ENCODE measurements at regions of chr17 and their contacts with region 1.

Region 1: DNA sequence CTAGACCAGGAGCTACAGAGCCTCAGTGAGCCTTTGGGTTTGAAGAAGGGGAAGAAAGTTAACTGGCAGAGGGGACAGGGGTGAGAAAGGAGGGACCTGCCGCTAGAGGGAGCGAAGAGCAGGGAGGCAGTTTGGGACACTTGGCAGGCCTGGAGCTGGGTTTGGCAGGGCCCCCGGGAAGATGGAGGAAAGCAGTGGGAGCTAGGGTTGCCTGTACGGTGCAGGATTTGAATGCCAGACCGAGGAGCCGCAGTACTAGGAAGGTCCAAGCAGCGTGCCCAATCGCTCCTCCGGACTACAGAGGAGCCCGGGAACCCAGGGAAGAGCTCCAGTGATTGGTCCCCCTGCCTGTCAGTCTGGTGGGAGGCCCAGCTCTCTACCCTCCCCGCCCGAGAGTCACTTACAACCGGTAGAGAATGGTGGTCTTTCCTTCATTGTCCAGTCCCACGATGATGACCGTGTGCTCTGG is 1.3 kb downstream of the ARL5C start:
- DNase-seq: peak; percentile 79 to 80
- H3K4me3 ChIP-seq: no peak overlapping the region
- H3K4me3 Mint-ChIP-seq: no peak overlapping the region
- H3K27ac Mint-ChIP-seq: no peak overlapping the region
- H3K4me1 ChIP-seq: peaks cover 21% of the 10 kb centered on the region
- H3K4me1 Mint-ChIP-seq: peaks cover 23% of the 10 kb centered on the region
- H3K27me3 ChIP-seq: no peaks in the 10 kb centered on the region
- H3K27me3 Mint-ChIP-seq: no peaks in the 10 kb centered on the region
- CTCF ChIP-seq: peak; percentile 76 to 86

Region 2: DNA sequence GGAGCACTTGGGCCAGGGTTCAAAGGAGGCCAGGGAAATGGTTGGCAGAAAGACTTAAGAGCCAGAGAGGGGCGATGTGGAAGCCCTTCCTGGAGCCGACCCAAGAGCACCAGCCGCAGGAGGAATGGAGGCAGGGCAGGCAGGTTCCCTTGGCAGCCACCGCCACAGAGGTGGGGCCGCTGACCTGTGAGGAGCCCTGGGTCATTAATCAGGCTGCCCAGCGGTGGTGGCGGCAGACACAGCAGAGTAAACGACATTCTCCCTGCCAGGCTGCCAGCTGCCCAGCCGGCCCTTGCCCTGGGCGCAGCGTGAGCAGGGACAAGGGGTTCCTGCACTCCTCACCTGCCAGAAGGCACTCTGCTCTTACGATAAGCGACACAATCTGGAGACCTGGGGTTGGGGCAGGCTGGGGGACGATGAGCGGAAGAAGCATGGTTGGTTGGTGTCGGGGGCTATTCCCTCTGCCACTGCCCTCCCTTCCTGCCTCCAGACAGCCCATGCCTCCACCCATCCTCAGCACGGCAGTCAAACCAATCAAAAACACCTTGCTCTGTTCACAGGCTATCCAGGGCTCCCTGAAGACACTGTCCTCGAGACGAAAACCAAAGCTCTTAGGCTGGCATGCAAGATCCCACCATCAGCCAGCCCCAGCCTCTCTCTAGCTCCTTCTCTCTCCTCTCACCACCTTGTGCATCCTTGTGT is 54.1 kb before region 1 on chr17:
- CTCF ChIA-PET with region 1: no interaction called
- POLR2A ChIA-PET with region 1: no interaction called
- intact Hi-C with region 1: no loop called
- DNase-seq: no peak
- H3K4me3 ChIP-seq: no peak overlapping the region
- H3K4me3 Mint-ChIP-seq: no peak overlapping the region
- H3K27ac Mint-ChIP-seq: no peak overlapping the region
- H3K4me1 ChIP-seq: 0 out of 2 replicates have a peak, but pooled peaks cover 3% of the 10 kb centered on the region
- H3K4me1 Mint-ChIP-seq: no peaks in the 10 kb centered on the region
- H3K27me3 ChIP-seq: no peaks in the 10 kb centered on the region
- H3K27me3 Mint-ChIP-seq: no peaks in the 10 kb centered on the region
- CTCF ChIP-seq: no peak

Region 3: DNA sequence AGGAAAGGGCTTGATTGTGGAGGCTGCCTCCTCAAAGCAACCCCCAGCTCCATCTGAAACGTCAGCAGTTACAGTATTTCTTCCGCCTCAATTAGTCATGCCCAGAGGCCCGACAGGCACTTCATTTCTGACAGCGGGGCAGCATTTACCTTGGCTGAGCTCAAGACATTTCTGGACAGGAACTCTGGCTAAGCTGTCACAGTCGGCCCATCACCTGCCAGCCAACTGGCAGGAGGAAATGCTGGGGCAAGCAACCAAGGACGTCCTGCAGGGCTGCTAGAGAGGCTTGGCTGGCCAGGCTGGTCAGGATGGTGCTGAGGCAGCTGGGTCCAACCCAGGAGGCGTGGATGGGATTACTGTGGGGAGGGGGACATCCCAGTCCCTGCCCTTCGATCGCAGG is 41.1 kb before region 1 on chr17:
- CTCF ChIA-PET with region 1: no interaction called
- POLR2A ChIA-PET with region 1: no interaction called
- intact Hi-C with region 1: no loop called
- DNase-seq: no peak
- H3K4me3 ChIP-seq: no peak overlapping the region
- H3K4me3 Mint-ChIP-seq: no peak overlapping the region
- H3K27ac Mint-ChIP-seq: no peak overlapping the region
- H3K4me1 ChIP-seq: no peaks in the 10 kb centered on the region
- H3K4me1 Mint-ChIP-seq: no peaks in the 10 kb centered on the region
- H3K27me3 ChIP-seq: no peaks in the 10 kb centered on the region
- H3K27me3 Mint-ChIP-seq: no peaks in the 10 kb centered on the region
- CTCF ChIP-seq: no peak

Region 4: DNA sequence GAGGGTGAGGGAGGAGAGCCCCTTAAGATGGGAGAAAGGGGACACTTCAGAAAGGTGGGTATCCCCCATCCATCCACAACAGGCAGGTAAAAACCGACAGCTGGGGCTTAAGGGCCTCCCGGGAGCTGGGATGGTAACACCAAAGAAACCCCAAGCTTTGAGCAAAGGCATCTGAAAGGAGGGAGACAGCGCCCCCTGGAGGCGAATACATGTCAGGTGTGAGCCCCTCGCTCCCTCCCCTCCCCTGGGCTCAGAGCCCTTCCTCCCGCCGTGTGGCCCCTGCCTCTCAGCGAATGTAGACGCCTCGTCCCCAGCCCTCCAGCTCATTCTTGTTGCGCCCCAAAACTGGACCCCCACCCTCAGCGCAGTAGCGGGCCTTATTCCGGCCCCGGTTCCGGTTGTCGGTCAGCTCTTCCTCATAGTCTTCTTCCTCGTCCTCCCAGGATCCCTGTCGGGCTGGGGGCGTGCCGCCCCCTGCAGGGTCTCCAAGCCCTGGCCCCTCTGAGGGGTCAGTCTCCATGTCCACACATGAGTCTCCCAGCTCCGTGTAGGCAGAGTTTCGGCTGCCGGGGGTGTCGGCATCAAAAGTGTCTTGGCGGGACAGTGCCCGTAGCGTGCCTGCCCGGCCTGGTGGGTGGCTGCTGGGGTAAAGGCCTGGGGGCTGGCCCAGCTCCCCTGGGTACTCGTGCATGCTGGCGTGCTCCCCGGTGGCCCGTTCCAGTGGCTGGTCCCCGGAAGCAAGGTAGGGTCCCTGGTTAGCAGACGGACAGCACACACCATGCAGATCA is 10.4 kb after region 1 on chr17:
- CTCF ChIA-PET with region 1: interaction called, 21 read pairs
- POLR2A ChIA-PET with region 1: interaction called, 3 read pairs
- intact Hi-C with region 1: loop called (anchors 1 kb)
- DNase-seq: peak; percentile 66 to 71
- H3K4me3 ChIP-seq: no peak overlapping the region
- H3K4me3 Mint-ChIP-seq: no peak overlapping the region
- H3K27ac Mint-ChIP-seq: no peak overlapping the region
- H3K4me1 ChIP-seq: no peaks in the 10 kb centered on the region
- H3K4me1 Mint-ChIP-seq: no peaks in the 10 kb centered on the region
- H3K27me3 ChIP-seq: no peaks in the 10 kb centered on the region
- H3K27me3 Mint-ChIP-seq: no peaks in the 10 kb centered on the region
- CTCF ChIP-seq: peak; percentile 68 to 70

Region 5: DNA sequence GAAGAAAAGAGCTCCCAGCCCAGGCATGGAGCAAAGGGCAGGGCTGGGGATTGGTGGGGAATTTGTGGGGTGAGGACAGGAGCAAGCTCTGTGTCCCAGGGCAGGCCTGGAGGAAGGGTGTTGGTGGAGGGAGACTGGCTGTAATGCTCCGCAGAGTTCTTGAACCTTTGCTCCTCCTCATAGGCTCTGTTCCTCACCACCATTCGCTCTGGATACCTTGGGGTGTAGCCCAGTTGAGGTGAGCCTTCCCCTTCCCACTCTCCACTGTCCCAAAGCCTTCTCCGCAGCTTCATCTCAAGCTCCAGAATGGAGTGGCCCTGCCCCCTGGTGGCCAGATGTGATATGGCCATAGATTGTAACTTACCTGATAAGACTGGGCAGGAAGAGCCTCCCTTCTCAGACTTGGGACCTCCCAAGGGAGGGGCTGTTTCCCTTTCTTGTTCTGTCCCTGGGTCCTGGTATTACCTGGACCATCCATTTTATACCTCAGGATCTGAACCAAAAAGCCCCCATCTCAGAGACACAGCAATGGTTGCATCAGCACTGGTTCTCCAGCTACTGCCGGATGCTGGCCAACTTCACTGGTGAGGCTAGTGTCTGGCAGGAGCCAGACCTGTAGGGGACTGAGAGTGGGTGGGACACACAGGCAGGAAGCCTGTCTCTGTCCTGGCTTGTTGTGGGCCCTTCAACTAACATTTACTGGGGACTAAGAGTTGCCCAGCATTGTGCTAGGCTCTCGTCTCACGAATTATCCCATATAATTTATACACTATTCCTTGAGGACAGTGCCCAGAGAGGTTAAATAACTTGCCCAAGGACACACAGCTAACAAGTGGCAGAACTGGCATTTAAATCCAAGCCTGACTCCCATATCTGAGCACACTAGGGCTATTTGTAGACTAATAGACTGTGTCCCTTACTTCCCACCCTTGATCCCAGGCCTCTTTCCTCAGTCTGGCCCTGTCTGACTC is 80.2 kb after region 1 on chr17:
- CTCF ChIA-PET with region 1: interaction called, 28 read pairs
- POLR2A ChIA-PET with region 1: no interaction called
- intact Hi-C with region 1: no loop called
- DNase-seq: peak; percentile 86 to 92
- H3K4me3 ChIP-seq: no peak overlapping the region
- H3K4me3 Mint-ChIP-seq: no peak overlapping the region
- H3K27ac Mint-ChIP-seq: no peak overlapping the region
- H3K4me1 ChIP-seq: no peaks in the 10 kb centered on the region
- H3K4me1 Mint-ChIP-seq: no peaks in the 10 kb centered on the region
- H3K27me3 ChIP-seq: no peaks in the 10 kb centered on the region
- H3K27me3 Mint-ChIP-seq: no peaks in the 10 kb centered on the region
- CTCF ChIP-seq: peak; percentile 94 to 96